Heart left ventricle (tissue), 16 donors: ENCODE measurements at regions of chr11 and their contacts with region 1.

Region 1: DNA sequence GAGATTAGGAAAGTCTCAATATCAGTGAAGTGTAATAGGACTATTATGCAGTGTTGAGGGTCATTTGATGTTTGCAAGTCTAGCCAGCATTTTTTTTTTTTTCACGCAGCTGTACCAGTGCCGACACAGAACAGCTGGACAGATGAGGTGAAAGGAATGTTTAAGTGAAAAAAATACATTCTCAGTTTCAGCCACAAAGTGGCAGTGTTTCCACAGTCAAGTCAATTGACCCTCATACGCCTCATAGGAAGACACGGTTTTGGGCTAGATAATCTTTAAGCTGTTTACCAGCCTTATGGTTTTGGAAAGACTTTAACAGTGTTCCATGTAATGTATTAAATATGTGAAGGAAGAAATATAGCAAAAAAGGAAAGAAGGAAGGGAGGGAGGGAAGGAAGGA is 349.9 kb upstream of the ANO3 start:
- DNase-seq: peak in 1 of 5 donors; percentile 10
- ATAC-seq: peak; percentile 56 to 86 (median 65)
- H3K4me3 ChIP-seq: peak overlapping the region in 1 of 12 donors; percentile 28
- H3K27ac ChIP-seq: no peak overlapping the region
- H3K4me1 ChIP-seq: no peaks in the 10 kb centered on the region
- H3K27me3 ChIP-seq: no peaks in the 10 kb centered on the region
- CTCF ChIP-seq: peak; percentile 28 to 67 (median 54)
- POLR2A ChIP-seq: no peak

Region 2: GRCh38 chr11:25961539-25961938 is 20.5 kb before region 1 on chr11:
- intact Hi-C with region 1: no loop called
- DNase-seq: no peak
- ATAC-seq: no peak
- H3K4me3 ChIP-seq: no peak overlapping the region
- H3K27ac ChIP-seq: no peak overlapping the region
- H3K4me1 ChIP-seq: no peaks in the 10 kb centered on the region
- H3K27me3 ChIP-seq: no peaks in the 10 kb centered on the region
- CTCF ChIP-seq: peak in 5 of 12 donors; percentile 11 to 32 (median 25)
- POLR2A ChIP-seq: no peak

Region 3: DNA sequence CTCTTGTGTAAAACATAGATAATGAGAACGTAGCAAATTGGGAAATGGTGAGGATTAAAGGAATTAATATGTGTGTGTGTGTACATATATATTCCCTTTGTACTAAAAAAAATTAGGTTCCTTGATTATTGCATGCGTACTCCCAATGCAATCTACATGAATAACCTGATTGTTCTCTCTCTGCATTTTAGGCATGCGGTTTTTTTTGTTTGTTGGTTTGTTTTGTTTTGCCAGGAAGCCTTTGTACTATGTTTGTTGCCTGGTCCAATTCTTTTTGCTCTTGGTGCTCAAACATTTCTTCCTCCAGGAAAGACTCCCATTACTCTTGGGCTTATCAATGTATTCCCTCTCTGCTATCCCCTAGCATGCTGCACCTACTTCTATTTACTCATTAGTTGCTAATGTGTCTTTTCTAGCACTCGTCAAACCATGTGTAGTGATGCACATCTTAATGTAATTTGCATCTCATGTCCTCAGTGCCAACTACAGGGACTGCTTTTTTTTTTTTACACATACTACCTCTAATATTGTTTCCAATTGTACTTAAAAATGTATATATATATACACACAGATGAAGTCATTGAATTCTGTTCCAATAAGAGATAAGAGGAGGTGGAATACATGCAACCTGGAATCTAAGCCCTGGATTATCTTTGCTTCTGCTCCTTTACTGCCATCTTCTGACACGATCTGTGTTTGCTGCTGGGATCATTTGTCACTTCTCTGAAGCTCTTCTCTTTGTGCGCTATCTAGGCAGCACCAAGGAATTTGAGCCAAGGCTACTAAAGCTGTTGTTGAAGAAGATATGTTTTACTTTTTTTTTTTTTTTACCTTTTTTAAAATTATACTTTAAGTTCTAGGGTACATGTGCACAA is 152.7 kb after region 1 on chr11:
- intact Hi-C with region 1: loop called (anchors 1 to 5 kb)
- DNase-seq: no peak
- ATAC-seq: no peak
- H3K4me3 ChIP-seq: no peak overlapping the region
- H3K27ac ChIP-seq: no peak overlapping the region
- H3K4me1 ChIP-seq: no peaks in the 10 kb centered on the region
- H3K27me3 ChIP-seq: no peaks in the 10 kb centered on the region
- CTCF ChIP-seq: peak in 11 of 12 donors; percentile 8 to 49 (median 37)
- POLR2A ChIP-seq: no peak

Region 4: GRCh38 chr11:26227296-26227695 is 245.3 kb after region 1 on chr11:
- intact Hi-C with region 1: loop called (anchors 2 to 10 kb)
- DNase-seq: no peak
- ATAC-seq: peak in 1 of 4 donors; percentile 63
- H3K4me3 ChIP-seq: no peak overlapping the region
- H3K27ac ChIP-seq: no peak overlapping the region
- H3K4me1 ChIP-seq: no peaks in the 10 kb centered on the region
- H3K27me3 ChIP-seq: no peaks in the 10 kb centered on the region
- CTCF ChIP-seq: peak in 9 of 12 donors; percentile 10 to 53 (median 46)
- POLR2A ChIP-seq: no peak

Region 5: DNA sequence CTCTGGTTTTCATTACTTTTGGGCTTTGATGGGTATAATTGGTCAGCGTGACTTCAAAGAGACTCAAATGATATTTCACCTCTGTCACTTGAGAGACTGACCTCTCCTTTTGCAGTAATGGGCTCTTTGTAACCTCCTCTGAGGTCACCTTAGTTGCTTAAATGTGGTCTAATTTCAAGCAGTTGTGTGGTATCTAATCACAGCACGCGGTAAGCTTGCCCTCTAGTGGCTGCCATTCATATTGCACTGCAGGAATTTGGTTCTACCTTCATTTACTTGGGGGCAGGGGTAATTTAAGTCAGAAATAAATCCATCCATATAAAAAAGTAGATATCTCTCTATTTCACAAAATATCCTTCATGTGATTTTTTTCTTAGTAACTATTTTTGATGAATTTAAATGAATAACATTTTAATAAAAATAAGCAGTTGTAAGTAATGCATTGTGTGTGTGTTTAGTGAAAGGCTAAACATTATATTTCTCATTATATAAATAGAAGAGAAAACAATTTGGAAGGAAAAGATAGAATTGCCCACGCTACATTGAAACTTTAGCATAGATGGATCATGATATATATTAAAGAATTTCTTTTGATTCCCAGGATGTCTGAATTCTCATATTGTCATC is 294.9 kb after region 1 on chr11:
- intact Hi-C with region 1: loop called (anchors 1 to 5 kb)
- DNase-seq: peak in 3 of 5 donors; percentile 32 to 38 (median 37)
- ATAC-seq: peak in 1 of 4 donors; percentile 54
- H3K4me3 ChIP-seq: no peak overlapping the region
- H3K27ac ChIP-seq: no peak overlapping the region
- H3K4me1 ChIP-seq: no peaks in the 10 kb centered on the region
- H3K27me3 ChIP-seq: peaks cover 0 to 4% (median 0%) of the 10 kb centered on the region in 9 donors
- CTCF ChIP-seq: peak; percentile 84 to 97 (median 92)
- POLR2A ChIP-seq: no peak